Naive thymus-derived CD4-positive, alpha-beta T cell (primary cell): ENCODE measurements at regions of chr12 and their contacts with region 1.

Region 1: DNA sequence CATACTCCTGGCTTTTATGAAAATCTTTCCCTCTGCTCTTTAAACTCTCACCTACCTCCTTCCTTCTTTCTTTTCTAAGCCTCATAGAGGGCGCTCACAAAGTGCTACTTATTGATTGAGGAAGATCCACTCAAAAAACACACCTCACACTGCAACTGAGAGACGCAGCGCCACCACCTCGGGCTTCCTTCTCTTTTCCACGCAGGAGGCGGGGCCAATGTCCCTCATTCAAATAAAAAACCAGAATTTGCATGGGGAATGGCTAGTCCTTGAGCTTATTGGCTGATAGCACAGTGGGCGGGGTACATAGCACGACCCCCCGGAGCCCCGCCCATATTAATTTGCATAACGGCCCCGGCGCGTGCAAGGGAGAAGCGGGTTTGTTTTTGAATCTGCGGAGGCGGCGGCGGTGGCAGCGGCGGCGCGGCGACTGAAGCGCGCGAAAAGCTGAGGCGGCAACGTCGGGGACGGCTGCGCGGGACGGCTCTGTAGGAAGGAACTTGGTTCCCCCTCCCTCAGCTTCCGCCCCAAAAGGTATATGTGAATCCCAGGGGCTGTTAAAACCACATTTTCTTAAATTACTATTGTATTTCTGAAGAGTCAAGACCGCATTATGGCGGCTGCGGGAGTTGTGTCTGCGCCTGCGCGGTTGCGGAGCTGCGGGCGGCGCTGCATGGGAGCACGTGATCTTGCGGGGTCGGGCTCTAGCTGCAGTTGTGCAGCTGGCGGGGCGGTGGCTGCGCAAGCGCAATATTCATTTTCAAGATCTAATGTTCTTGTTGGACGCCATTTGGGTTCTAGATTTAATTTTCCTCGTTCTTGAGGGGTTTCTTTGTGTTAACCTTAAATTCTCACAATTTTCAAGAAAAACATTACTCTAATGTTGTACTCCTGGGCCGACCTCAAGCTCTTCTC is at the start of gene ATF7IP:
- DNase-seq: peak; percentile 91 to 98 (median 97)
- ATAC-seq: peak; percentile 93
- H3K4me3 ChIP-seq: peak within 1 kb of the TSS; percentile 83
- H3K4me3 Mint-ChIP-seq: peak within 1 kb of the TSS; percentile 78 to 97 (median 88)
- H3K27ac ChIP-seq: peak within 1 kb of the TSS; percentile 84
- H3K27ac Mint-ChIP-seq: peak within 1 kb of the TSS; percentile 88 to 98 (median 94)
- H3K4me1 ChIP-seq: peaks cover 13 to 20% of the 10 kb centered on the region in 2 donors
- H3K4me1 Mint-ChIP-seq: peaks cover 21 to 52% (median 34%) of the 10 kb centered on the region in 7 donors
- H3K27me3 ChIP-seq: no peaks in the 10 kb centered on the region
- H3K27me3 Mint-ChIP-seq: peaks cover 0 to 2% (median 0%) of the 10 kb centered on the region in 5 donors
- total RNA-seq, gene ATF7IP: 113 to 181 (median 144) TPM

Region 2: GRCh38 chr12:14239350-14239934 is 126.1 kb before region 1 on chr12:
- CTCF ChIA-PET with region 1: interaction called, 31 read pairs
- POLR2A ChIA-PET with region 1: interaction called, 29 read pairs
- intact Hi-C with region 1: loop called (anchors 1 kb)
- DNase-seq: peak in 2 of 9 donors; percentile 12 to 40
- ATAC-seq: peak; percentile 69
- H3K4me3 ChIP-seq: peak overlapping the region; percentile 52
- H3K4me3 Mint-ChIP-seq: peak overlapping the region; percentile 75 to 90 (median 82)
- H3K27ac ChIP-seq: peak overlapping the region; percentile 1
- H3K27ac Mint-ChIP-seq: peak overlapping the region; percentile 37 to 93 (median 87)
- H3K4me1 ChIP-seq: peaks cover 0 to 6% of the 10 kb centered on the region in 2 donors
- H3K4me1 Mint-ChIP-seq: peaks cover 17 to 29% (median 22%) of the 10 kb centered on the region in 7 donors
- H3K27me3 ChIP-seq: no peaks in the 10 kb centered on the region
- H3K27me3 Mint-ChIP-seq: no peaks in the 10 kb centered on the region

Region 3: DNA sequence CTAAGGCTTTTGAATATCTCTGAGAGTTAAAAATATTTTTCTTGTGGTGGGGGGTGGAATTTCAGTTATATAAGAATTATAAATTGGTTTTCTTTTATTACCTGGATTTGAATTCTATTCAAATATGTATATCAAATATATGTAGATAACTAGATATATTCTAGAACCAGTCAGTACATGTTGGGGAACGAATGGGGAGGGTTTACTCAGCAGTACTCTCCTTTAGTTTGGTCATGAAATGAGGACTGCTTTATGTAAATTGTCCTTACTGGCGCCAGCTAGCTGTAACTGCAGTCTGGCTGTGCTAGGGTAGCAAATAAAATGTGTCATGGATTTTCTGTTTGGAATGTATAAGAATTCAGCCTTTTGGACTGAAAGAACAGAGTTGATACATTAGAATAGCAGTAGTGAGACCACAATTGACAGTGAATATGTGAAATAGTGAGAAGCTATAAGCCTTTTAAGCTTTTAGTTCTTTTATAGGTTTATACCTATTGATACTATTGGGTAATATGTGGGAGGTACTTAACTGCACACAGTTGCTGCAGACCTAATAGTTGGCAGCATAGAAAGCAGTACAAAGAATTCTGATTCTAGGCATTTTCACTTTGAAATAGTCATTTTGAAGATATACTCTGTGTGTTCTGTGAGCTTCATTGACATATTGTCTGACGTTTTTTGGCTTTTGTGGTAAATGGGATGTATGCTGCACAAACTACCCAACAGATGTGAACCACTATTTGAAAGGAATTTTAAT is 28.9 kb after region 1 on chr12:
- CTCF ChIA-PET with region 1: interaction called, 10 read pairs
- POLR2A ChIA-PET with region 1: interaction called, 98 read pairs
- intact Hi-C with region 1: loop called (anchors 1 kb)
- DNase-seq: peak in 7 of 9 donors; percentile 57 to 82 (median 71)
- ATAC-seq: peak; percentile 86
- H3K4me3 ChIP-seq: peak overlapping the region; percentile 33
- H3K4me3 Mint-ChIP-seq: peak overlapping the region; percentile 49 to 87 (median 76)
- H3K27ac ChIP-seq: peak overlapping the region; percentile 75
- H3K27ac Mint-ChIP-seq: peak overlapping the region; percentile 83 to 97 (median 95)
- H3K4me1 ChIP-seq: peaks cover 62 to 84% of the 10 kb centered on the region in 2 donors
- H3K4me1 Mint-ChIP-seq: peaks cover 47 to 99% (median 91%) of the 10 kb centered on the region in 7 donors
- H3K27me3 ChIP-seq: no peaks in the 10 kb centered on the region
- H3K27me3 Mint-ChIP-seq: no peaks in the 10 kb centered on the region

Region 4: GRCh38 chr12:14618983-14619382 is 253.4 kb after region 1 on chr12:
- CTCF ChIA-PET with region 1: interaction called, 3 read pairs
- POLR2A ChIA-PET with region 1: no interaction called
- intact Hi-C with region 1: loop called in 1 of 2 experiments (anchors 1 kb)
- DNase-seq: peak in 3 of 9 donors; percentile 3 to 19 (median 10)
- ATAC-seq: no peak
- H3K4me3 ChIP-seq: no peak overlapping the region
- H3K4me3 Mint-ChIP-seq: peak overlapping the region in 1 of 10 donors; percentile 19
- H3K27ac ChIP-seq: no peak overlapping the region
- H3K27ac Mint-ChIP-seq: no peak overlapping the region
- H3K4me1 ChIP-seq: no peaks in the 10 kb centered on the region
- H3K4me1 Mint-ChIP-seq: peaks cover 0 to 4% (median 0%) of the 10 kb centered on the region in 7 donors
- H3K27me3 ChIP-seq: no peaks in the 10 kb centered on the region
- H3K27me3 Mint-ChIP-seq: peaks cover 2 to 22% (median 21%) of the 10 kb centered on the region in 5 donors

Region 5: GRCh38 chr12:14803011-14803829 is 437.7 kb after region 1 on chr12 and contains the starts of genes C12orf60 and WBP11:
- CTCF ChIA-PET with region 1: no interaction called
- POLR2A ChIA-PET with region 1: interaction called, 17 read pairs
- intact Hi-C with region 1: loop called (anchors 1 kb)
- DNase-seq: peak; percentile 56 to 95 (median 91)
- ATAC-seq: peak; percentile 98
- H3K4me3 ChIP-seq: peak within 1 kb of the TSS; percentile 80
- H3K4me3 Mint-ChIP-seq: no peak within 1 kb of the TSS
- H3K27ac ChIP-seq: peak within 1 kb of the TSS; percentile 97
- H3K27ac Mint-ChIP-seq: no peak within 1 kb of the TSS
- H3K4me1 ChIP-seq: peaks cover 14 to 19% of the 10 kb centered on the region in 2 donors
- H3K4me1 Mint-ChIP-seq: peaks cover 0 to 26% (median 10%) of the 10 kb centered on the region in 7 donors
- H3K27me3 ChIP-seq: no peaks in the 10 kb centered on the region
- H3K27me3 Mint-ChIP-seq: no peaks in the 10 kb centered on the region
- total RNA-seq, gene C12orf60: 0.22 to 1.7 (median 1.2) TPM in 4 of 5 experiments, not detected in the other
- total RNA-seq, gene WBP11: 77.9 to 129 (median 90.4) TPM

Region 6: DNA sequence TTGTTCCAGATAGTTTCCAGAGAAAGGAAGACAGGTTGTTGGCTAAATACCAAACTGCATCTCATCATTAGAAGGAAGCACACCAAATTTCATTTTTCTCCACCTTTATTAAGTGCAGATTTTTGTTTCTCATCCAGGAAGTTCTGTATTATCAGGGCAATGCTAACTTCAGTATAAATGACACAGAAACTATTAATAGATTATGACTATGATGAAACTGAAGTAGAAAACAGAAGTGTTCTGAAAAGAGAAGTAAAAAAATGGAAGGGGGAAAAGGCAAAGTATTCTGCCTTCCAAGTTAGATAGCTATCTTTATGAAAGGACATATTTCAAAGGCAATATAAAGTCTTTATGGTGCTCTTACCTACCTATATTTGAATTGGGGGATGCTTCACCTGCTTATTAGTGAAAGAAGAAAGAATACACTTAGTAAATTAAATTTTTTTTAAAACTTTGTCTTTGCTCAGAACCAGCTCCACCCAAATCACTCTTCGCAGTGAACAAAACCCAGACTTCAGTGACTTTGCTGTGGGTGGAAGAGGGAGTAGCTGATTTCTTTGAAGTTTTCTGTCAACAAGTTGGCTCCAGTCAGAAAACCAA is 1180.7 kb after region 1 on chr12:
- CTCF ChIA-PET with region 1: no interaction called
- POLR2A ChIA-PET with region 1: interaction called, 3 read pairs
- intact Hi-C with region 1: loop called in 1 of 2 experiments (anchors 5 kb)
- DNase-seq: peak in 7 of 9 donors; percentile 73 to 89 (median 85)
- ATAC-seq: peak; percentile 93
- H3K4me3 ChIP-seq: no peak overlapping the region
- H3K4me3 Mint-ChIP-seq: peak overlapping the region; percentile 36 to 85 (median 76)
- H3K27ac ChIP-seq: peak overlapping the region; percentile 74
- H3K27ac Mint-ChIP-seq: peak overlapping the region; percentile 95 to 100 (median 98)
- H3K4me1 ChIP-seq: peaks cover 0 to 50% of the 10 kb centered on the region in 2 donors
- H3K4me1 Mint-ChIP-seq: peaks cover 30 to 98% (median 86%) of the 10 kb centered on the region in 7 donors
- H3K27me3 ChIP-seq: peaks cover 0 to under 1% of the 10 kb centered on the region in 2 donors
- H3K27me3 Mint-ChIP-seq: no peaks in the 10 kb centered on the region